Esophagus muscularis mucosa (tissue), 4 donors: ENCODE measurements at regions of chr7 and their contacts with region 1.

Region 1: GRCh38 chr7:148286150-148286549 is 304.4 kb upstream of the C7orf33 start:
- DNase-seq: no peak
- H3K4me3 ChIP-seq: no peak overlapping the region
- H3K27ac ChIP-seq: no peak overlapping the region
- H3K4me1 ChIP-seq: peaks cover 0 to 9% (median 3%) of the 10 kb centered on the region in 4 donors
- H3K27me3 ChIP-seq: no peaks in the 10 kb centered on the region
- CTCF ChIP-seq: peak; percentile 34 to 43 (median 39)
- EP300 ChIP-seq: no peak
- POLR2A ChIP-seq: no peak

Region 2: DNA sequence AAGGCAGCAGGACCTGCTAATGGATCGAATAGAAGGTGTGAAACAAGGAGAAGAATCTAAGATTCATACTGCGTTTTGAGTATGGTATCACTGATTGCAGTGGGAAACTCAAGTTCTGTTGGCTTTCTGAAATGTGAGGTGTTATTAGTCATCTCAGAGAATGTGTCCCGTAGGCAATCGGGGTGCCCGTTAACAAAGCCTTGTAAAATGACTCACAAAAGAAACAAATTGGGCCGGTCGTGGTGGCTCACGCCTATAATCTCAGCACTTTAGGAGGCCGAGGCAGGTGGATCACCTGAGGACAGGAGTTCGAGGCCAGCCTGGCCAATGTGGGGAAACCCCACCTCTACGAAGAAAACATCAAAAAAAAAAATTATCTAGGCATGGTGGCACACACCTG is 186.3 kb after region 1 on chr7:
- intact Hi-C with region 1: no loop called
- DNase-seq: no peak
- H3K4me3 ChIP-seq: no peak overlapping the region
- H3K27ac ChIP-seq: no peak overlapping the region
- H3K4me1 ChIP-seq: no peaks in the 10 kb centered on the region
- H3K27me3 ChIP-seq: no peaks in the 10 kb centered on the region
- CTCF ChIP-seq: no peak
- EP300 ChIP-seq: no peak
- POLR2A ChIP-seq: no peak

Region 3: GRCh38 chr7:148485618-148486017 is 199.5 kb after region 1 on chr7:
- intact Hi-C with region 1: loop called (anchors 10 kb)
- DNase-seq: no peak
- H3K4me3 ChIP-seq: no peak overlapping the region
- H3K27ac ChIP-seq: no peak overlapping the region
- H3K4me1 ChIP-seq: peaks cover 0 to 3% (median under 1%) of the 10 kb centered on the region in 4 donors
- H3K27me3 ChIP-seq: no peaks in the 10 kb centered on the region
- CTCF ChIP-seq: peak; percentile 19 to 29 (median 19)
- EP300 ChIP-seq: no peak
- POLR2A ChIP-seq: no peak